Gastrocnemius medialis (tissue), 4 donors: ENCODE measurements at regions of chr5 and their contacts with region 1.

Region 1: GRCh38 chr5:176447982-176448608 is at the start of gene FAF2:
- DNase-seq: peak; percentile 94 to 96
- ATAC-seq: peak; percentile 98 to 99
- H3K4me3 ChIP-seq: peak within 1 kb of the TSS; percentile 84 to 99 (median 94)
- H3K27ac ChIP-seq: peak within 1 kb of the TSS; percentile 91 to 97 (median 96)
- H3K4me1 ChIP-seq: peaks cover 36 to 39% of the 10 kb centered on the region in 2 donors
- H3K27me3 ChIP-seq: no peaks in the 10 kb centered on the region
- CTCF ChIP-seq: peak; percentile 87 to 99 (median 99)
- POLR2A ChIP-seq: peak; percentile 91 to 95
- total RNA-seq, gene FAF2: 14.0 to 20.7 (median 14.7) TPM

Region 2: DNA sequence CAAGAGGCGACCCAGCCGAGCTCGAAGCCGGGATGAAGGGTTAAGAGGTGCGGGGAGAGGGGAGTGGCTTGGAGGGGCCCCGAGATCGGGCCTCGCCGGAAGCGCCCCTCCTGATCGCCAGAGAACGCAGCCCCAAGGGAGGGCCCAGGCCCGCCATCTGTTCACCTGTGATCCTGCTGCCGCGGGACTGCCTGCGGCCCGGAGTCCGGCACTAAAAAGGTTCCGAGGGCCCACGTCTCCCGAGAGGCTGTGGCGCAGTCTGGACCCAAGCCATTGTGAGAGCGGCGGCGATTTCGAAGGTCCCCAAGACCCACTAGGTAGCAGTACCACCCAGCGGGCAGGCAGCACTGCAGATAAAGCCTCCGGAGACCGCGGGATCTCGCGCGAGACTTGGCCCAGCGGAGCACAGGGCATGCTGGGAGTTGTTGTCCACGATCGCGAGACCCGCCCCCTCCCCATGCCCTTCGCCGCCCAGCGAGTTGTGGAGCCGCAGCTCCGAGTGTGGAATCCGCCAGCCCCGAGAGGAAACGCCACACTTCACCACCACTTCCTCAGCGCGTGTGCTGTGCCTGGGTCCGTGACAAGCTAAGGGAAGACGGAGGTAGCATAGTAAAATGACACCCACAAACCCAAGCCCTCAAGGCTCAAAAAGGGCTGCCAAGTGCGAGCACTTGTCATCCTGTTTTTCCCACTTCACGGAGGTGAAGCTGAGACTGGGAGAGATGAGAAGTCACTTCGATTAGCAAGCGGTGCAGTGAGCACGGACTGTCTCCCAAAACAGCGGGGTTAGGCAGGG is 86.5 kb before region 1 on chr5 and contains the start of gene KIAA1191:
- in situ Hi-C with region 1: no loop called
- intact Hi-C with region 1: loop called (anchors 1 kb)
- DNase-seq: peak; percentile 94 to 96
- ATAC-seq: peak; percentile 85 to 87
- H3K4me3 ChIP-seq: peak within 1 kb of the TSS; percentile 83 to 99 (median 96)
- H3K27ac ChIP-seq: peak within 1 kb of the TSS; percentile 92 to 97 (median 94)
- H3K4me1 ChIP-seq: peaks cover 14 to 28% of the 10 kb centered on the region in 2 donors
- H3K27me3 ChIP-seq: no peaks in the 10 kb centered on the region
- CTCF ChIP-seq: peak in 2 of 5 experiments; percentile 34 to 51
- POLR2A ChIP-seq: peak; percentile 97 to 98
- total RNA-seq, gene KIAA1191: 76.3 to 174 (median 84.1) TPM

Region 3: GRCh38 chr5:176415952-176416924 is 31.9 kb before region 1 on chr5 and contains the start of gene CLTB:
- in situ Hi-C with region 1: no loop called
- intact Hi-C with region 1: loop called (anchors 1 kb)
- DNase-seq: peak; percentile 83 to 89
- ATAC-seq: peak; percentile 83 to 88
- H3K4me3 ChIP-seq: peak within 1 kb of the TSS; percentile 76 to 97 (median 92)
- H3K27ac ChIP-seq: peak within 1 kb of the TSS; percentile 88 to 99 (median 98)
- H3K4me1 ChIP-seq: peaks cover 39 to 41% of the 10 kb centered on the region in 2 donors
- H3K27me3 ChIP-seq: no peaks in the 10 kb centered on the region
- CTCF ChIP-seq: peak; percentile 53 to 93 (median 91)
- POLR2A ChIP-seq: peak; percentile 95 to 96
- total RNA-seq, gene CLTB: 261 to 386 (median 302) TPM

Region 4: DNA sequence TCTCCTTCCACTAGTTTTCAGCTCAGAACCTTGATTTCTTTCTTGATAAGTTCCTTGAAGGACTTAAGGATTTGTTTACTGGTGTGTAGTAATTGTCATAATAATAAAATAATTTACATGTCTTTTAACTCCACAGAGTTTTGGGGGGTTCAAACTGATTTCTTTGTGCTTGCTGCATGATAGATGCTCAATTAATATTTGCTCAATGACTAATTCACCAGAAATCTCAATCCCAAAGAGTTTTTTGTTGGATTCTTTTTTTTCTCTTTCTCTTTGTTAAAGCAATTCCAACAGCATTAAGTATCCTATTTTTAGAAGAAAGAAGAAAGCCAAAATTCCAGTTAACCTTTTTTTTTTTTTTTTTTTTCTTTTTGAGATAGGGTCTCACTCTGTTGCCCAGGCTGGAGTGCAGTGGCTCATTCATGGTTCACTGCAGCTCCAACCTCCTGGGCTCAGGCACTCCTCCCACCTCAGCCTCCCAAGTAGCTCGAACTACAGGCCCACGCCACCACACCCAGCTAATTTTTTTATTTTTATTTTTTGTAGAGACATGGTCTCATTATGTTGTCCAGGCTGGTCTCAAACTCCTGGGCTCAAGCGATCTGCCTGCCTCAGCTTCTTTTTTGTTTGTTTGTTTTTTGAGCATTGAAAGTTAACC is 10.9 kb after region 1 on chr5:
- in situ Hi-C with region 1: no loop called
- intact Hi-C with region 1: loop called (anchors 1 kb)
- DNase-seq: no peak
- ATAC-seq: no peak
- H3K4me3 ChIP-seq: no peak overlapping the region
- H3K27ac ChIP-seq: peak overlapping the region in 2 of 4 donors; percentile 40 to 44
- H3K4me1 ChIP-seq: peaks cover 30 to 39% of the 10 kb centered on the region in 2 donors
- H3K27me3 ChIP-seq: no peaks in the 10 kb centered on the region
- CTCF ChIP-seq: no peak
- POLR2A ChIP-seq: no peak

Region 5: GRCh38 chr5:176543428-176544173 is 95.5 kb after region 1 on chr5:
- in situ Hi-C with region 1: loop called in 2 of 4 experiments (anchors 5 to 25 kb)
- intact Hi-C with region 1: loop called (anchors 1 kb)
- DNase-seq: peak; percentile 54 to 76
- ATAC-seq: peak; percentile 86 to 88
- H3K4me3 ChIP-seq: peak overlapping the region; percentile 69 to 77 (median 74)
- H3K27ac ChIP-seq: peak overlapping the region; percentile 91 to 99 (median 94)
- H3K4me1 ChIP-seq: peaks cover 20 to 27% of the 10 kb centered on the region in 2 donors
- H3K27me3 ChIP-seq: no peaks in the 10 kb centered on the region
- CTCF ChIP-seq: no peak
- POLR2A ChIP-seq: peak; percentile 77

Region 6: DNA sequence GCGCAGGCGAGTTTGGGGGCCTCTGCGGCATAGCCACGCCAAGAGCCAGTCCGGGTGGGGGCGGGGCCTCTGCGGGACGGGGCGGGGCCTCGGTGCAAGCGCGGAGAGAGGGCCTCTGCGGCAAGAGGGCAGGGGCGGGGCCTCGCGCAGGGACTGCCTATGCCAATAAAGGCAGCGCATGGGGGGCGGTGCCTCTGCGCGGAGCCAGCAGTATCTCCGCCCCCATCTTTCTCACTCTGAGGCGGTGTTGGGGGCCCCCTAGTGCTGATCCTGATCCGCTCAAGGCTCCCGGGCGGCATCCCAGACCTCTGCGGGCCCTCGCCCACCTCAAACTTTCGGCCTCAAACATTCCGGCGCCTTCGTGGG is 171.1 kb after region 1 on chr5:
- in situ Hi-C with region 1: no loop called
- intact Hi-C with region 1: no loop called
- DNase-seq: peak; percentile 35 to 52
- ATAC-seq: peak; percentile 27 to 32
- H3K4me3 ChIP-seq: peak overlapping the region in 3 of 4 donors; percentile 15 to 40 (median 29)
- H3K27ac ChIP-seq: no peak overlapping the region
- H3K4me1 ChIP-seq: peaks cover 27% of the 10 kb centered on the region in 2 donors
- H3K27me3 ChIP-seq: peaks cover 22 to 38% (median 32%) of the 10 kb centered on the region in 3 donors
- CTCF ChIP-seq: peak in 1 of 5 experiments; percentile 46
- POLR2A ChIP-seq: no peak